ENCODE measurements at regions of chr4 and their contacts with region 1.

Region 1: GRCh38 chr4:76515975-76516843 is 81.2 kb downstream of the SHROOM3 start:
- DNase-seq: peak; percentile 14
- H3K4me3 ChIP-seq: no peak overlapping the region
- H3K27ac ChIP-seq: no peak overlapping the region
- H3K4me1 ChIP-seq: peaks cover 7% of the 10 kb centered on the region; the same call in 1 of the 2 replicates
- H3K27me3 ChIP-seq: no peaks in the 10 kb centered on the region

Region 2: DNA sequence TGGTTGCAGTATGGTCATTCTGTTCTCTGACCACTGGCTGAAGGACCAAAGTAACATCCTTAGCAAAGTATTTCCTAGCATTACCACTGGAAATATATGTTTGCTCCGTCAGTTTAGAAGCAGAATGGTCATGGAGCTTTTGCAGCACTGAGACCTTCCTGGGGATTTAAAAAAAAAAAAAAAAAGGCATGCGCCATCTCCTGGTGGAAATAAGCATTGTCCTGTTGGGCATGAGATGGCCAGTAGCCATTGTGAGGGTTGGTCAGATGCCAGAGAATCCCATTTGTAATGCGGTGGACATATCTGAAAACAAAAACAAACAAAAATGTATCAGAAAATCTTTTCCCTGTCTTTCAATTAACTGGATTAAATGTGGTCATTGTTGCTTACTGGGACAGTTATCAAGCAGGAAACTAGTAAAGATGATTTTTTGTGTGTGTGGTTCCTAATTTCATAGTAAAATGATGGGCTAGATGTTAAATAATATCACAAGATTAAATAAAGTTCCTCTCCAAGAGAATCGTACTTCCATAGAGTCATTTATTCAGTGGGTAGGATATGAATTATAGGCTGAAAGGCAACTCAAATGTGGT is 242.2 kb after region 1 on chr4:
- in situ Hi-C with region 1: loop called (anchors 10 kb)
- DNase-seq: peak; percentile 86
- H3K4me3 ChIP-seq: no peak overlapping the region
- H3K27ac ChIP-seq: peak overlapping the region; percentile 49
- H3K4me1 ChIP-seq: peaks cover 50% of the 10 kb centered on the region
- H3K27me3 ChIP-seq: no peaks in the 10 kb centered on the region